Head of caudate nucleus (tissue), 42 donors: ENCODE measurements at regions of chr16 and their contacts with region 1.

Region 1: GRCh38 chr16:58336332-58337089 is 41.7 kb upstream of the PRSS54 start:
- DNase-seq: peak; percentile 55 to 96 (median 88)

Region 2: GRCh38 chr16:58409316-58409973 is 72.9 kb after region 1 on chr16:
- intact Hi-C with region 1: no loop called
- DNase-seq: peak in 12 of 42 donors; percentile 35 to 73 (median 52)

Region 3: GRCh38 chr16:58487566-58488351 is 151.2 kb after region 1 on chr16:
- intact Hi-C with region 1: loop called (anchors 2 kb)
- DNase-seq: peak; percentile 71 to 93 (median 86)